ENCODE measurements at regions of chr1 and their contacts with region 1.

Region 1: DNA sequence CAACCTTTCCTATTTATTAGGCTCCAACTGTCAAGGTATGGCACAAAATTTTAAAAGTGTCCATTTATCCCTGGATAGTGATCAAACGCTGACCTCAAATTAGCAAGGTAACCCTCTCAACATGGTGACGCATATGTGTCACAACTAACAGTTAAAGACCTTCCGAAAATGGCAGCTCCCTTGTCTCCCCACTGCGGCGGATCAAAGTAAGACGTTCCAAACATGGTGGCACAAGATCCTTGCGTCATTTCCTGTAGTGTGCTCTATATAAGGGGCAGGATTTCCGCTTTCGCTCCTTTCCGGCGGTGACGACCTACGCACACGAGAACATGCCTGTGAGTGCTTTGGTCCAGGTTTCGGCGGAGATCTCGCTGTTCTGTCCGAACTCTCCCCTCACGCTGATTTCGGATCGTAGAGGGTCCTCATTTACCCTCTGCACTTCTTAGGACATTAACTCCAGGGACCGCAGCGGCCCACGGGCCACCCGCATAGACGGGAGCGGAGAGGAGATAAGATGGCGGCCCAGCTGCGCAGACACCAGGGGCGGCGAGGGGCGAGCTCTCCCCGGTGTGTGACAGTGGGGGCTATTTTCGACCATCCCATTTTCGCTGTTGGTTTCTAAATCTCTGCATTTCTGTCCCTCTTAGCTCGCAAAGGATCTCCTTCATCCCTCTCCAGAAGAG is at the start of gene RPS27:
- DNase-seq: peak; percentile 86 to 93
- H3K4me3 ChIP-seq: peak within 1 kb of the TSS; percentile 78 to 95 (median 87)
- H3K27ac ChIP-seq: peak within 1 kb of the TSS; percentile 95
- H3K4me1 ChIP-seq: peaks cover 0 to 8% (median 3%) of the 10 kb centered on the region in 4 experiments; a peak in 4 of 7 replicates
- H3K27me3 ChIP-seq: no peaks in the 10 kb centered on the region
- CTCF ChIP-seq: no peak
- EP300 ChIP-seq: no peak
- POLR2A ChIP-seq: peak; percentile 100
- RAD21 ChIP-seq: no peak
- total RNA-seq, gene RPS27: 1,810 and 1,941 TPM in 2 replicates

Region 2: GRCh38 chr1:153783233-153784190 is 207.1 kb before region 1 on chr1:
- CTCF ChIA-PET with region 1: no interaction called
- POLR2A ChIA-PET with region 1: interaction called, 17 read pairs
- DNase-seq: peak; percentile 80 to 97
- H3K4me3 ChIP-seq: peak overlapping the region; percentile 62 to 71 (median 66)
- H3K27ac ChIP-seq: peak overlapping the region; percentile 81; the same call in 1 of the 2 replicates
- H3K4me1 ChIP-seq: peaks cover 0 to 2% (median 0%) of the 10 kb centered on the region in 4 experiments; a peak in 2 of 7 replicates
- H3K27me3 ChIP-seq: no peaks in the 10 kb centered on the region; a peak in 1 of 7 replicates
- CTCF ChIP-seq: no peak
- EP300 ChIP-seq: no peak
- POLR2A ChIP-seq: peak in 1 of 2 experiments; percentile 86; a peak in 2 of 3 replicates
- RAD21 ChIP-seq: no peak

Region 3: DNA sequence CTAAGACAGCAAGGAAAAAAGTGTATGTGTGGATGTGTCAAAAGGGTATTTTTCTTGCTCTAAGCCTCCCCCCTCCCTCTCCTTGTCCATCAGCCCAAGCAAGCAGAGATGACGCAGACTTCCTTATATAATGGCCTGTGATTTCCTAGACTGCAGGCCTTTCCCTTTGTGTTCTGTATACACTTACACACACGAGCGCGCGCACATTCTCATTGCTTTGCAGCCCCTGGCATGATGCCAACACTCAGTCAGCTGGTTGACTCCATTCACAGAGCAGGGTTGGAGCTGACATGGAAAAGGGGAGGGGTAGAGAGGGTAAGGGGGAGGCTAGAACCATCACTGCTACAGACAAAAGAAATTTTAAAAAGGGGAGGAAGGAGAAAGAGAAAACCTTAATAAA is 109.6 kb before region 1 on chr1:
- CTCF ChIA-PET with region 1: interaction called, 5 read pairs
- POLR2A ChIA-PET with region 1: interaction called, 12 read pairs
- DNase-seq: no peak
- H3K4me3 ChIP-seq: no peak overlapping the region
- H3K27ac ChIP-seq: no peak overlapping the region
- H3K4me1 ChIP-seq: peaks cover 0 to 13% (median 4%) of the 10 kb centered on the region in 4 experiments
- H3K27me3 ChIP-seq: no peaks in the 10 kb centered on the region
- CTCF ChIP-seq: no peak
- EP300 ChIP-seq: no peak
- POLR2A ChIP-seq: no peak
- RAD21 ChIP-seq: no peak

Region 4: DNA sequence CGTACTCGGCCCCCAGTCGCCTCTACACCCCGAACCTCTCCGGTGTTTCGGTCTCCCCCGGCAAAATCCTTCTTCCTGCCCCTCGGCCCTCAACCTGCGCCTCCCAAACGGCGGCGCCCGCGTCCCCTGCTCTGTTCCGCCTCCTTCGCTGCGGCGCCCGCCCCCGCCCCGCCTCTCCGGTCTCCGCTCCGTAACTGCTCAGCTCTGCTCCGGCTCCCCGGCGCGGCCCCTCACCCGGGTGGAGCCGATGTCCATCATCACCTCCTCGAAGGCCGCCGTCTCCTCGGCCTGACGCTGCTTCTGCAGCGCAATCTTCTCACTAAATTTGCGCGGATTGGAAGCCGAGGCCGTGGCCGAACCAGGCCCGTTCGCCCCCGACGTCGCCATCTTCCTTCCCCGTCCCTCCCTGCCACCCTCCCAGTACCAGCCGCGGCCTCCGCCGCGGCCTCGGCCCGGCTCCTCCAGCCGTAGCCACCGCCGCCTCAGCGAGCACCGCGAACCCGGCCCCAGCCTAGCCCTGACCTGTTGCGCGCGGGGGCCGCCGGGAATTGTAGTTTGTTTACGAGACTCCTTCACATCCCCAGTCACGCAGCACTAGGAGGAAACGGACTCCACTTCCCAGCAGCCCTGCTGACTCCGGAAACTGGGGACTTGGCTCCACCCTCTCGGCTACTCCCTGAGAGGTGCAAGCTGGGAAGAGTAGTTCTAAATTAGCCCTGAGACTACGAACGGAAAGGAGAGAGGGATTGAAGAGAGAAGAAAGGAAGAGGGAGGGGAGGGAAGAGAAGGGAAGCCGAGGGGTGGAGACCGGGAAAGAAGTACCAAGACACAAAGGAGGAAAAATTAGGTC is 32.3 kb before region 1 on chr1 and contains the start of gene CRTC2:
- CTCF ChIA-PET with region 1: interaction called, 31 read pairs
- POLR2A ChIA-PET with region 1: interaction called, 454 read pairs
- DNase-seq: peak; percentile 96 to 97
- H3K4me3 ChIP-seq: peak within 1 kb of the TSS; percentile 82 to 98 (median 88)
- H3K27ac ChIP-seq: peak within 1 kb of the TSS; percentile 77
- H3K4me1 ChIP-seq: peaks cover 6 to 20% (median 12%) of the 10 kb centered on the region in 4 experiments
- H3K27me3 ChIP-seq: no peaks in the 10 kb centered on the region
- CTCF ChIP-seq: no peak
- EP300 ChIP-seq: 0 out of 3 replicates have a peak, but pooled peaks of 1 of the 2 experiments have one; percentile 13
- POLR2A ChIP-seq: peak in 1 of 2 experiments; percentile 37; a peak in 2 of 3 replicates
- RAD21 ChIP-seq: no peak; a peak in 1 of 4 replicates
- total RNA-seq, gene CRTC2: 28.6 and 33.7 TPM in 2 replicates

Region 5: GRCh38 chr1:154012129-154012528 is 21.5 kb after region 1 on chr1:
- CTCF ChIA-PET with region 1: no interaction called
- POLR2A ChIA-PET with region 1: interaction called, 40 read pairs
- DNase-seq: no peak
- H3K4me3 ChIP-seq: no peak overlapping the region
- H3K27ac ChIP-seq: no peak overlapping the region
- H3K4me1 ChIP-seq: no peaks in the 10 kb centered on the region
- H3K27me3 ChIP-seq: no peaks in the 10 kb centered on the region
- CTCF ChIP-seq: no peak
- EP300 ChIP-seq: no peak
- POLR2A ChIP-seq: no peak
- RAD21 ChIP-seq: no peak

Region 6: DNA sequence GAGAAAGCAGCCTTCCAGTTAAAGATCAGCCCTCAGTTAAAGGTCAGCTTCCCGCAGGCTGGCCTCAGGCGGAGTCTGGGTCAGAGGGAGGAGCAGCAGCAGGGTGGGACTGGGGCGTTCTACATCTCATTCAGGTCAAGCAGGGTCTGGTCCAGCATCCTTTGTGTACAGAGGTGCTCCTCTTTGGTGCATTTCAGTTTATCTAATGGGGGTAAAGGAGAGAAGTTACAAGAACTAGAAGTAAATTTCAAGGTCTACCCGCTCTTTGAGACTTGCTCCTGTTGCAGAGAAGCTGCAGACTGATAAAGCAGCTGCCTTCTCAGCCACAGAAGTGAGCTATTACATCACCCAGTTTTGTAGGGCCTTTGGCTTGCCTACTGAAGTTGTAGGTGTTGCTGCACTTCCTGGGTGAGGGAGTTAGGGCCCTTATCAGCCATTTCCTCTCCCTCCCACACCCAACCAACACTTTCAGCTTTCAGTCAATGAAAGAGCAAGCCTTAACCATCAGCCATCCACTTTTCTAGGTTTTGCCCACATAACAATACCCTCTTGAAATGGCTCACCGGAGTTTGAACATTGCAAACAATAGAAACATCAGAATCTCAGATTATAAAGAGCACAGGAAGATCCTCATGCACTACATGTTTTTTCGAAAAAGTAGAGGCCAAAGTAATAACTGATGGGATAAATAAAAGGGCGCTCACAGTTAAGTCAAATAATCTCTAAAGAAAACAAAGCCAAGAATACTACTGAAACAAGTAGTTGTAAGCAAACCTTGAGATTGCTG is 167.1 kb after region 1 on chr1:
- CTCF ChIA-PET with region 1: interaction called, 3 read pairs
- POLR2A ChIA-PET with region 1: interaction called, 29 read pairs
- DNase-seq: no peak
- H3K4me3 ChIP-seq: no peak overlapping the region
- H3K27ac ChIP-seq: 0 out of 2 replicates have a peak overlapping the region, but pooled peaks have one; percentile 10
- H3K4me1 ChIP-seq: peaks cover 0 to 3% (median 0%) of the 10 kb centered on the region in 4 experiments; a peak in 1 of 7 replicates
- H3K27me3 ChIP-seq: no peaks in the 10 kb centered on the region
- CTCF ChIP-seq: no peak
- EP300 ChIP-seq: no peak
- POLR2A ChIP-seq: no peak
- RAD21 ChIP-seq: no peak

Region 7: GRCh38 chr1:154213274-154213673 is 222.7 kb after region 1 on chr1:
- CTCF ChIA-PET with region 1: no interaction called
- POLR2A ChIA-PET with region 1: no interaction called
- DNase-seq: no peak
- H3K4me3 ChIP-seq: no peak overlapping the region
- H3K27ac ChIP-seq: no peak overlapping the region
- H3K4me1 ChIP-seq: no peaks in the 10 kb centered on the region
- H3K27me3 ChIP-seq: no peaks in the 10 kb centered on the region
- CTCF ChIP-seq: no peak
- EP300 ChIP-seq: no peak
- POLR2A ChIP-seq: no peak
- RAD21 ChIP-seq: no peak

Region 8: GRCh38 chr1:154276797-154277196 is 286.2 kb after region 1 on chr1:
- CTCF ChIA-PET with region 1: no interaction called
- POLR2A ChIA-PET with region 1: no interaction called
- DNase-seq: peak in 1 of 2 experiments; percentile 51
- H3K4me3 ChIP-seq: no peak overlapping the region
- H3K27ac ChIP-seq: no peak overlapping the region
- H3K4me1 ChIP-seq: peaks cover 0 to 5% (median 0%) of the 10 kb centered on the region in 4 experiments; a peak in 2 of 7 replicates
- H3K27me3 ChIP-seq: no peaks in the 10 kb centered on the region
- CTCF ChIP-seq: peak; percentile 56 to 58 (median 56)
- EP300 ChIP-seq: no peak
- POLR2A ChIP-seq: no peak
- RAD21 ChIP-seq: peak; percentile 62 to 67

Measured in H1 (cell line).